Ovary (tissue), 10 donors: ENCODE measurements at regions of chr17 and their contacts with region 1.

Region 1: GRCh38 chr17:43634591-43635125 is 27.1 kb downstream of the MEOX1 start:
- DNase-seq: peak in 1 of 5 donors; percentile 46
- H3K4me3 ChIP-seq: no peak overlapping the region
- H3K27ac ChIP-seq: no peak overlapping the region
- H3K4me1 ChIP-seq: no peaks in the 10 kb centered on the region
- H3K27me3 ChIP-seq: no peaks in the 10 kb centered on the region
- CTCF ChIP-seq: no peak
- EP300 ChIP-seq: no peak
- POLR2A ChIP-seq: no peak

Region 2: DNA sequence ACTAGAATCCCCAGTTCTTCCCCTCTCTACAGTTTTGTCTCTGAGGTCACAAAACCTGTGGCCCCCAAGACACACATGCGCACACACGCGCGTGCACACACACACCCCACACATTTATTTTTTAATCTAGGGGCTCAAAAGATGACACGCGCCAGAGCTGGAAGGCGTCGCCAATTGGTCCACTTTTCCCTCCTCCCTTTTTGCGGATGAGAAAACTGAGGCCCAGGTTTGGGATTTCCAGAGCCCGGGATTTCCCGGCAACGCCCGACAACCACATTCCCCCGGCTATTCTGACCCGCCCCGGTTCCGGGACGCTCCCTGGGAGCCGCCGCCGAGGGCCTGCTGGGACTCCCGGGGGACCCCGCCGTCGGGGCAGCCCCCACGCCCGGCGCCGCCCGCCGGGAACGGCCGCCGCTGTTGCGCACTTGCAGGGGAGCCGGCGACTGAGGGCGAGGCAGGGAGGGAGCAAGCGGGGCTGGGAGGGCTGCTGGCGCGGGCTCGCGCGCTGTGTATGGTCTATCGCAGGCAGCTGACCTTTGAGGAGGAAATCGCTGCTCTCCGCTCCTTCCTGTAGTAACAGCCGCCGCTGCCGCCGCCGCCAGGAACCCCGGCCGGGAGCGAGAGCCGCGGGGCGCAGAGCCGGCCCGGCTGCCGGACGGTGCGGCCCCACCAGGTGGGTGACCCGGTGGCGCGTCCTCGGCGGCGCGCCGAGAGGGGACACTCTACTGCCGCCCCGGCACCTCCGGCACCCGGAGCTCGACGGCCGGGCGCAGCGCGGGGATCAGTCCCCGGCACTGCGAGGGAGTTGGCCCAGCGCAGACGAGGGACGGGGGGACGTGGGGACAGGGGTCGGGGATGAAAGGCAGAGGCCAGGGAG is 1346.5 kb before region 1 on chr17 and contains the start of gene STAT5A:
- intact Hi-C with region 1: loop called in 1 of 4 experiments (anchors 5 kb)
- DNase-seq: peak; percentile 89 to 92 (median 90)
- H3K4me3 ChIP-seq: peak within 1 kb of the TSS; percentile 70
- H3K27ac ChIP-seq: peak within 1 kb of the TSS; percentile 70 to 87
- H3K4me1 ChIP-seq: peaks cover 14% of the 10 kb centered on the region
- H3K27me3 ChIP-seq: no peaks in the 10 kb centered on the region
- CTCF ChIP-seq: no peak
- EP300 ChIP-seq: no peak
- POLR2A ChIP-seq: peak; percentile 77
- total RNA-seq, gene STAT5A: 43.1 to 82.8 (median 51.6) TPM